ENCODE measurements at regions of chr3 and their contacts with region 1.

Region 1: DNA sequence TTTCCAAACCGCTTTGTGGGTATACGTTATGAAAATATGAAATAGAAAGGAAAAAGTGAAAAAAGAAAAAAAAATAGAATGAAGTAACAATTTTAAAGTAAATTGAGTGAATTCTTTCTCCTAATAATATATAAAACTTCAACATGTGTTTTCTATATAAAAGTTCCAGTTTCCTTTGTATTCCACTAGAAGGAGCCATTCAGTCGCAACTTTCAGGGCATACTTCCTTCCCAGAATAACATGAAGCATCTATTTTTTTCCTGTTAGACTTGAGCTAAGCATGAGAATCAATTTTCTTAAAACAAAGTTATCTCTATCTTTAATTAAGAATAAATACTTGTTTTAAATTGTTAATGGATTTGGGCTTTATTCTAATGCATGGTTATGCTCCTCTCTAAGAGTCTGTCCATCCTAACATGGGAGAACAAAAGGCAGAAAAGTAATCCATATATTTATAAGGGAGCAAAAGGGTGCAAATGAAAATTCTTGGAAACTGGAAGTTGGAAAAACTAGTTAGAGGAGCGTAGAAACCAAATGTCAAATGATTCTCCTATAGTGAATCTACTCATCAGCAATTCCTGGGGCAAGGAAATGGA is 16.0 kb upstream of the VGLL3 start:
- DNase-seq: peak; percentile 51
- ATAC-seq: peak; percentile 49; the same call in 1 of the 2 replicates
- H3K4me3 ChIP-seq: no peak overlapping the region
- H3K27ac ChIP-seq: no peak overlapping the region
- H3K4me1 ChIP-seq: no peaks in the 10 kb centered on the region
- H3K27me3 ChIP-seq: no peaks in the 10 kb centered on the region
- CTCF ChIP-seq: peak; percentile 81

Region 2: GRCh38 chr3:87491843-87492242 is 484.9 kb after region 1 on chr3:
- CTCF ChIA-PET with region 1: no interaction called
- POLR2A ChIA-PET with region 1: no interaction called
- intact Hi-C with region 1: loop called (anchors 5 kb)
- DNase-seq: peak; percentile 21
- ATAC-seq: peak; percentile 50; the same call in 1 of the 2 replicates
- H3K4me3 ChIP-seq: no peak overlapping the region
- H3K27ac ChIP-seq: no peak overlapping the region
- H3K4me1 ChIP-seq: no peaks in the 10 kb centered on the region
- H3K27me3 ChIP-seq: no peaks in the 10 kb centered on the region
- CTCF ChIP-seq: no peak